ENCODE measurements at regions of chr18 and their contacts with region 1.

Region 1: GRCh38 chr18:31857526-31858106 is 85.3 kb downstream of the TRAPPC8 start:
- DNase-seq: peak; percentile 65
- H3K4me3 ChIP-seq: no peak overlapping the region
- H3K27ac ChIP-seq: peak overlapping the region; percentile 12
- H3K4me1 ChIP-seq: peaks cover 15% of the 10 kb centered on the region
- H3K27me3 ChIP-seq: no peaks in the 10 kb centered on the region
- CTCF ChIP-seq: no peak
- POLR2A ChIP-seq: no peak

Region 2: GRCh38 chr18:31555971-31556747 is 301.5 kb before region 1 on chr18:
- CTCF ChIA-PET with region 1: no interaction called
- POLR2A ChIA-PET with region 1: no interaction called
- dilution Hi-C with region 1: no loop called
- intact Hi-C with region 1: no loop called
- DNase-seq: peak; percentile 82
- H3K4me3 ChIP-seq: no peak overlapping the region
- H3K27ac ChIP-seq: no peak overlapping the region
- H3K4me1 ChIP-seq: peaks cover 3% of the 10 kb centered on the region
- H3K27me3 ChIP-seq: no peaks in the 10 kb centered on the region
- CTCF ChIP-seq: peak; percentile 49 to 65
- POLR2A ChIP-seq: no peak

Region 3: DNA sequence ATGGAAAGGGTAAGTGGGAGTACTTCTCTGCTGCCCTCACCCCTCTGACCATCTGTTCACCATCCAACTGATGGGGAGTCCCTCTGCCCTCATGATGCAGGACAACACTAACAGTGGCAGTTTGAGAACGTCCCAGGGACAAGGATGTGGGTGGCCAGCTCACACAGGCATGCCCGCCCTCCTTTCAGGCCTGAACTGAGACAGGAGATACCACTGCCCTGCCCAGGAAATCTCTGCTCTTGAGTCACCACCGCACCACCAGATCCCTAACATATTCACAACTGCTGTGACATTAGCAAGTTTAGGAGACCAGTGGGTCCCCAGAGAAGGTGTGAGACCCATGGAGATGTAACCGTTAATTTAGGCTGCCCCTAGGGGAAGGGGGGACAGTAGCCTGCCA is 19.1 kb after region 1 on chr18:
- CTCF ChIA-PET with region 1: no interaction called
- POLR2A ChIA-PET with region 1: interaction called, 11 read pairs
- dilution Hi-C with region 1: no loop called
- intact Hi-C with region 1: no loop called
- DNase-seq: no peak
- H3K4me3 ChIP-seq: no peak overlapping the region
- H3K27ac ChIP-seq: peak overlapping the region; percentile 5
- H3K4me1 ChIP-seq: peaks cover 5% of the 10 kb centered on the region
- H3K27me3 ChIP-seq: no peaks in the 10 kb centered on the region
- CTCF ChIP-seq: no peak
- POLR2A ChIP-seq: no peak

Region 4: GRCh38 chr18:31920277-31920676 is 62.7 kb after region 1 on chr18:
- CTCF ChIA-PET with region 1: no interaction called
- POLR2A ChIA-PET with region 1: no interaction called
- dilution Hi-C with region 1: no loop called
- intact Hi-C with region 1: no loop called
- DNase-seq: no peak
- H3K4me3 ChIP-seq: no peak overlapping the region
- H3K27ac ChIP-seq: no peak overlapping the region
- H3K4me1 ChIP-seq: no peaks in the 10 kb centered on the region
- H3K27me3 ChIP-seq: no peaks in the 10 kb centered on the region
- CTCF ChIP-seq: no peak
- POLR2A ChIP-seq: no peak

Region 5: GRCh38 chr18:33334781-33335180 is 1477.2 kb after region 1 on chr18:
- CTCF ChIA-PET with region 1: no interaction called
- POLR2A ChIA-PET with region 1: no interaction called
- dilution Hi-C with region 1: no loop called
- intact Hi-C with region 1: no loop called
- DNase-seq: no peak
- H3K4me3 ChIP-seq: no peak overlapping the region
- H3K27ac ChIP-seq: no peak overlapping the region
- H3K4me1 ChIP-seq: no peaks in the 10 kb centered on the region
- H3K27me3 ChIP-seq: no peaks in the 10 kb centered on the region
- CTCF ChIP-seq: no peak
- POLR2A ChIP-seq: no peak

Measured in endothelial cell of umbilical vein (primary cell).